Activated CD4-positive, alpha-beta T cell treated with anti-CD3 and anti-CD28 coated beads for 36 hours (primary cell): ENCODE measurements at regions of chr17 and their contacts with region 1.

Region 1: DNA sequence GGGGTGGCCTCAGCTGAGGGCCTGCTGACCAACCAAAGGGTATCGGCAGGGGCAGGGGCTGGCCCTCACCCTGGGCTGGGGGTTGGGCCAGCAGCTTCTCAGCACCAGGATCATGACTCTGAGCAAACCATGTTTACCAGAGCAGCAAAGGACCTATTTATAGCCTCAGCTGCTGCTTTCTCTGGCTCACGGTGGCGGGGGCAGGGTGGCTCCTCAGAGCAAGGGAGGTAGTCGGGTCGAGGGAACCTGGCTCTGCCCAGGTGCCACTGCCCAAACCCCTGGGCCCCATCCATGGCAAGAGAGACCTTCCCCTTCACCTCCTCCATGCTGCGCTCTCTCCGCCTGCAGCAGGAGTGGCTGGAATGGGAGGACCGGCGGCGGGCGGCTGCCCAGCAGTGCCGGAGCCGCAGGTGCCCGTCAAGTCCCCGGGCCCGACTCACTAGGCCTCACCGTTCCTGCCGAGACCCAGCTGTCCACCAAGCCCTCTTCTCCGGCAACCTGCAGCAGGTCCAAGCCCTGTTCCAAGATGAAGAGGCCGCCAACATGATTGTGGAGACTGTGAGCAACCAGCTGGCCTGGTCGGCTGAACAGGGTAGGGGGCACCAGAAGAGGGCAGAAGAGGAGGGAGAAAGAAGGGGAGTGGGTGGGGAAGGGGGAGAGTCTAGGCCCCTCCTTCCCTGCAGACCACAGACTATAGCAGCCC is at the start of gene ASB16:
- DNase-seq: no peak
- ATAC-seq: no peak
- H3K4me3 Mint-ChIP-seq: no peak within 1 kb of the TSS
- H3K27ac Mint-ChIP-seq: no peak within 1 kb of the TSS
- H3K4me1 Mint-ChIP-seq: peaks cover 8% of the 10 kb centered on the region
- H3K27me3 Mint-ChIP-seq: no peaks in the 10 kb centered on the region
- total RNA-seq, gene ASB16: 0.14 TPM

Region 2: GRCh38 chr17:44149750-44150329 is 20.8 kb before region 1 on chr17:
- CTCF ChIA-PET with region 1: interaction called, 15 read pairs
- POLR2A ChIA-PET with region 1: no interaction called
- intact Hi-C with region 1: no loop called
- DNase-seq: no peak
- ATAC-seq: no peak
- H3K4me3 Mint-ChIP-seq: no peak overlapping the region
- H3K27ac Mint-ChIP-seq: no peak overlapping the region
- H3K4me1 Mint-ChIP-seq: no peaks in the 10 kb centered on the region
- H3K27me3 Mint-ChIP-seq: no peaks in the 10 kb centered on the region